ENCODE measurements at regions of chr18 and their contacts with region 1.

Region 1: GRCh38 chr18:63422087-63422809 is at the start of gene VPS4B:
- DNase-seq: peak; percentile 99
- H3K4me3 ChIP-seq: peak within 1 kb of the TSS; percentile 62 to 70
- H3K27ac ChIP-seq: peak within 1 kb of the TSS; percentile 90 to 93
- H3K4me1 ChIP-seq: no peaks in the 10 kb centered on the region
- H3K27me3 ChIP-seq: no peaks in the 10 kb centered on the region
- CTCF ChIP-seq: peak in 2 of 4 experiments; percentile 21 to 49
- POLR2A ChIP-seq: peak; percentile 82
- total RNA-seq, gene VPS4B: 28.3 to 31.7 TPM

Region 2: DNA sequence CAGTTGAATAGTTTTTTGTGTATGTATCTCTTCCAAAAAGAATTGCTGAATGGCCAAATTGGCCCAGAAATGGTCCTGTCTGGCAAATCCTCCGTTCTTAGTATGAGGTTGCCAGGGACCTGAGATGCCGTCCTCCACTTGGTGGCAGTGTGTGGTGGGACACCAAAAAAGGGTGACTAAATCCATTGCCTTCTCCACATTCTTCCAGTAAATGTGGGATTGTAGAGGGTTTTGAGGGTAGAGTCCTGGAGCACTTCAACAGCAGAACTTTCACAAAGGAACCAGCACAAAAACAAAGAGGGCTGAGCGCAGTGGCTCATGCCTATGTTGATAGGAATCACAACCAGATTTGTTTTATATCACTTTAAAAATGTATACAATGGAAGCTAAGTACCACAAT is 302.6 kb before region 1 on chr18:
- intact Hi-C with region 1: loop called (anchors 10 kb)
- DNase-seq: peak; percentile 20
- H3K4me3 ChIP-seq: no peak overlapping the region
- H3K27ac ChIP-seq: no peak overlapping the region
- H3K4me1 ChIP-seq: no peaks in the 10 kb centered on the region
- H3K27me3 ChIP-seq: no peaks in the 10 kb centered on the region
- CTCF ChIP-seq: peak in 3 of 4 experiments; percentile 21 to 54 (median 43)
- POLR2A ChIP-seq: no peak

Region 3: GRCh38 chr18:63367053-63367953 is 54.9 kb before region 1 on chr18 and contains the start of gene KDSR:
- intact Hi-C with region 1: loop called (anchors 1 kb)
- DNase-seq: peak; percentile 95
- H3K4me3 ChIP-seq: peak within 1 kb of the TSS; percentile 72 to 75
- H3K27ac ChIP-seq: peak within 1 kb of the TSS; percentile 95
- H3K4me1 ChIP-seq: no peaks in the 10 kb centered on the region
- H3K27me3 ChIP-seq: no peaks in the 10 kb centered on the region
- CTCF ChIP-seq: no peak
- POLR2A ChIP-seq: peak; percentile 73
- total RNA-seq, gene KDSR: 46.1 to 52.3 TPM

Measured in prostate gland (tissue), 2 donors.